Ovary (tissue), 10 donors: ENCODE measurements at regions of chr6 and their contacts with region 1.

Region 1: GRCh38 chr6:19655744-19656143 is 181.4 kb upstream of the ID4 start:
- DNase-seq: no peak
- H3K4me3 ChIP-seq: no peak overlapping the region
- H3K27ac ChIP-seq: no peak overlapping the region
- H3K4me1 ChIP-seq: no peaks in the 10 kb centered on the region
- H3K27me3 ChIP-seq: no peaks in the 10 kb centered on the region
- CTCF ChIP-seq: no peak
- EP300 ChIP-seq: no peak
- POLR2A ChIP-seq: no peak

Region 2: DNA sequence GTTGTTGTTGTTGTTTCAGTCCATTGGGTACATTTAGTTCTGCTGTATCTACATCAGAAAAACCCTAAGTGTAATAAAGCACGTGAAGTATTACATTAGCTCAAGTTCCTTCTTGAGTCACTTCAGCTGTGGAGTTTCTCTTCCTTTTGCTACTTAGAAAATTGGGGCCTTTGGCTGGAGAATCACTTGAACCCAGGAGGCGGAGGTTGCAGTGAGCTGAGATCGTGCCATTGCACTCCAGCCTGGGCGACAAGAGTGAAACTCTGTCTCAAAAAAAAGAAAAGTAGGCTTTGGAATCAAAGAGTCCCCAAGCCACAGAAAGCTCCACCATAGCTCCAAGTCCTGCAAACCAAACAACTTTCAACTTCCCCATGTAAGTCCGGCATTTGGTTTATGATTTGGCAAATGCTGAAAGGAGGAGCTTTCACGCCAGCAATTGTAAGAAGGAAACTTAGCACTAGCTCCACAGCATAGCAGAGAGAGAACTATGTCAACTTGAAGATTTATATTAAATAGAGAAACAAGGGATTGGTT is 1325.1 kb before region 1 on chr6:
- intact Hi-C with region 1: loop called in 1 of 4 experiments (anchors 10 kb)
- DNase-seq: no peak
- H3K4me3 ChIP-seq: no peak overlapping the region
- H3K27ac ChIP-seq: no peak overlapping the region
- H3K4me1 ChIP-seq: no peaks in the 10 kb centered on the region
- H3K27me3 ChIP-seq: no peaks in the 10 kb centered on the region
- CTCF ChIP-seq: no peak
- EP300 ChIP-seq: no peak
- POLR2A ChIP-seq: no peak

Region 3: DNA sequence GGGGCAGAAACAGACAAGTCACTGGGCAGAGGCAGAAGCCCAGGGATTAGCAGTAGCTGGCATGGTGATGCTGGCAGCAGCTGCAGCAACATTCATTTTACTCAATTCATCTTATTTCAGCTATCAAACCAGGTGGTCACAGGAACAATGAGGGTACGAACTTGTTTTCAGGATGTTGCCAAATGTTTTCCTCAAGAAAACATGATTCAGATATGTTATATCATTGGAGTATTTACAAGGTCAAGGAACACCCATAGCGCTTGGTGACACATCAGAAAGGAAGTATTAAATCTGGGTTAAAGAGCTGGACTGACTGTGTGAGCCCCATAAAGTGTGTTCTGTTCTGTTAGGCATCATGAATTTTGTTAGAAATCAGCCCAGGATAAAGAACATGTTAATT is 275.5 kb before region 1 on chr6:
- intact Hi-C with region 1: no loop called
- DNase-seq: no peak
- H3K4me3 ChIP-seq: no peak overlapping the region
- H3K27ac ChIP-seq: no peak overlapping the region
- H3K4me1 ChIP-seq: no peaks in the 10 kb centered on the region
- H3K27me3 ChIP-seq: no peaks in the 10 kb centered on the region
- CTCF ChIP-seq: no peak
- EP300 ChIP-seq: no peak
- POLR2A ChIP-seq: no peak